ENCODE measurements at regions of chr14 and their contacts with region 1.

Region 1: DNA sequence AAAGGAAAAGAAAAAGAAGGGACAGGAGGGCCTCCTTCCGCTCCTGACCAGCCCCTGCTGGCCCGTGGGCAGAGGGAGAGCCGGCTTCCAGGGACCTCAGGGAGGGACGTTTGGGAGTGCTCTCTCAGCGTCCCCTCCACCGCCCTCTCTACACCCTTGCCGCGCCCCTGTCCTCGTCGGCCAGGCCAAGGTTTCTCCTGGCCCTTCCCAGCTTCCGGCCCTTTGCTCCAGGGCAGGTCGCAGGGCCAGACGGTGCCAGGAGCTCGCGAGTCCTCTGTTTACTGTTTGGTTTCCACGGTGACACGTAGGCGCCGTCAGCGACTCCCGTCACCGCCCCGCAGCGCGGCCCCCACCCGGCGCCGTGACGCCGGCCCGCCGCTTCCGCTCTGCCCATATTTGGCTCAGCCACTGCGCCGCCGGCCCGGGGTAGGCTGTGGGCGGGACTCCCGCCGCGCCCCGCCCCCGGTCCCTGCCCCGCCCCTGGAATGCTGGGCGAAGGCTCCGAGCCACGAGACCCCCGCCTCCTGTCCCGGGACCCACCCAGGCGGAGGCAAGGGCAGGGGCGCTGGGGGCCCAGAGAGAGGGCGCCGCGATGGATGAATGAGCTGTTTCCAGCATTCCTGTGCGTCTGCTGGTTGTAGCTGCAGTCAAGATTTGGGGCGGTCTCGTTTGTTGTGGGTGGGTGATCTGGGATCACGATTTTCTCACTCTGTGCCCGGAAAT is 15.5 kb downstream of the FOS start:
- DNase-seq: peak; percentile 90 to 99 (median 94)
- ATAC-seq: peak; percentile 87
- H3K4me3 ChIP-seq: peak overlapping the region; percentile 31 to 62
- H3K4me3 Mint-ChIP-seq: peak overlapping the region; percentile 88
- H3K27ac ChIP-seq: peak overlapping the region; percentile 95 to 99
- H3K27ac Mint-ChIP-seq: peak overlapping the region; percentile 93
- H3K4me1 ChIP-seq: peaks cover 23% of the 10 kb centered on the region
- H3K4me1 Mint-ChIP-seq: peaks cover 23% of the 10 kb centered on the region
- H3K27me3 ChIP-seq: peaks cover 0 to 2% of the 10 kb centered on the region in 2 experiments
- H3K27me3 Mint-ChIP-seq: no peaks in the 10 kb centered on the region
- CTCF ChIP-seq: no peak

Region 2: DNA sequence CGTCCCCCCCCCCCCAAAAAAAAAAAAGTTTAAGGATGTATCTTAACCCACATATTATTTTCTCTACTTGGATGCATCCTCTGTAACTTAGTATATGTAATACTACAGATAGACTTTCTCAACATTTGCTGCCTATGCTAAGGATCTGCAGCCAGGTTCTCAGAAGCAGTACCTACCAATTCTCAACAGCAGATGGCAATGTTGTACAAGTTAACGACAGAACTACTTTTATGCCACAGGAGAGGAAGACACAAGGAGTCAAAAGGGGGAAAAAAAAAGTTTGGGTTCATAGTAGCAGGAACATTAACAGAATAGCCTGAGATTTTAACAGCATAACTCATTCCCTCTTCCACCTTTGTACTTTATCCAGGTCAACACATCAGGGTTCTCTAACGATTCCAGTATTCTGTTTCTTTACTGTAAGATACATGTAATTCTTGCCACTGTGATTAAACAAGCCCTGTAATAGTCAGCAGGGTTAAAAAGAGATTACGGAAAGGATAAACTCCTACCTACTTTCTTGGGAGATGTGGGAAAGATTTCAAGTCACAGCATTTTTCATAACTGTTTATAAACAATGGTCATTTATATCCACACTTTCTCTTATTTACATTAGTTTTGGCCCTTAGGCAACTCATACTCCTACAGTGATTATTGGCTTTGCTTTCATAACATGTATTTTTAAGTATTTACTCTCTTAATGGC is 161.5 kb before region 1 on chr14:
- CTCF ChIA-PET with region 1: interaction called, 473 read pairs
- POLR2A ChIA-PET with region 1: interaction called, 8 read pairs
- intact Hi-C with region 1: loop called in 1 of 2 experiments (anchors 1 kb)
- DNase-seq: peak in 6 of 9 experiments; percentile 28 to 86 (median 54)
- ATAC-seq: peak; percentile 91
- H3K4me3 ChIP-seq: no peak overlapping the region
- H3K4me3 Mint-ChIP-seq: no peak overlapping the region
- H3K27ac ChIP-seq: no peak overlapping the region
- H3K27ac Mint-ChIP-seq: peak overlapping the region; percentile 12
- H3K4me1 ChIP-seq: peaks cover 3% of the 10 kb centered on the region
- H3K4me1 Mint-ChIP-seq: peaks cover 18% of the 10 kb centered on the region
- H3K27me3 ChIP-seq: no peaks in the 10 kb centered on the region
- H3K27me3 Mint-ChIP-seq: no peaks in the 10 kb centered on the region
- CTCF ChIP-seq: peak; percentile 79

Region 3: DNA sequence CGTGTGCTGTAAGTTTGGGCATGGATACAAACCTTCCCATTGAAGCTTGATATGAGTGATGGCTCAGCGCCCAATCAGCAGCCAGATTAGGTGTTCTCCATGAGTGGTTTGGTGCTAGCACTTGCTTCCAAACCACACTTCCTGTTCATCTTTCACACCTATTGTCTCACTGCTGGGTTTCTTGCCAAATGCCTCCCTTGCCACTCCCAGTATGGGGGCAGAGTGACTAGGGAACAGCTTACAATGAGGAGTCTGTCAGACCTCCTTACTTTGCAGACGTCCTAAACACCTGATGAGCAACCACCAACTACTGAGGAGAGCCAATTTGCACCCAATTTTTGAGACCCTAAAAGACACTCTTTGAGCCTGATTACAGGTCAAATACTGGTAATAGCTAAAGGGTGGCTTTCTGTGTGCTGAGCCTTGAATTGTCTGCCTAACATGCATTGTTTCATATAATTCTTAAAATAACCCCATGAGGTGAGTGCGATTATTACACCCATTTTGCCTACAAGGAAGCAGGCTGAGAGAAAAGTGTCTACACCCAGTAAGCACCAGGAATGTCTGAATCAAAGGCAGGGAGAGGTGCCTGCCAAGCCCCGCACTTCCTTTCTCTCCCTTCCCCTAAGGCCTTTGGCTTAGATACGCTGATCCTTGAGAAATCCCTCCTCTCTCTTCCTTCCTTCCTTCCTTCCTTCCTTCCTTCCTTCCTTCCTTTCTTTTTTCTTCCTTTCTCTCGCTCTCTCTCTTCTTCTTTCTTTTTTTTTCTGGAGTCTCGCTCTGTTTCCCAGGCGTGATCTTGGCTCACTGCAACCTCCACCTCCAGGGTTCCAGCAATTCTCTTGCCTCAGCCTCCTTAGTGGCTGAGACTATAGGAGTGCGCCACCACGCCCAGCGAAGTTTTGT is 63.7 kb before region 1 on chr14:
- CTCF ChIA-PET with region 1: interaction called, 124 read pairs
- POLR2A ChIA-PET with region 1: no interaction called
- intact Hi-C with region 1: loop called (anchors 1 kb)
- DNase-seq: peak; percentile 25 to 93 (median 56)
- ATAC-seq: peak; percentile 75
- H3K4me3 ChIP-seq: no peak overlapping the region
- H3K4me3 Mint-ChIP-seq: peak overlapping the region; percentile 24
- H3K27ac ChIP-seq: peak overlapping the region in 1 of 2 experiments; percentile 55
- H3K27ac Mint-ChIP-seq: peak overlapping the region; percentile 81
- H3K4me1 ChIP-seq: peaks cover 41% of the 10 kb centered on the region
- H3K4me1 Mint-ChIP-seq: peaks cover 51% of the 10 kb centered on the region
- H3K27me3 ChIP-seq: no peaks in the 10 kb centered on the region
- H3K27me3 Mint-ChIP-seq: no peaks in the 10 kb centered on the region
- CTCF ChIP-seq: peak; percentile 35

Region 4: DNA sequence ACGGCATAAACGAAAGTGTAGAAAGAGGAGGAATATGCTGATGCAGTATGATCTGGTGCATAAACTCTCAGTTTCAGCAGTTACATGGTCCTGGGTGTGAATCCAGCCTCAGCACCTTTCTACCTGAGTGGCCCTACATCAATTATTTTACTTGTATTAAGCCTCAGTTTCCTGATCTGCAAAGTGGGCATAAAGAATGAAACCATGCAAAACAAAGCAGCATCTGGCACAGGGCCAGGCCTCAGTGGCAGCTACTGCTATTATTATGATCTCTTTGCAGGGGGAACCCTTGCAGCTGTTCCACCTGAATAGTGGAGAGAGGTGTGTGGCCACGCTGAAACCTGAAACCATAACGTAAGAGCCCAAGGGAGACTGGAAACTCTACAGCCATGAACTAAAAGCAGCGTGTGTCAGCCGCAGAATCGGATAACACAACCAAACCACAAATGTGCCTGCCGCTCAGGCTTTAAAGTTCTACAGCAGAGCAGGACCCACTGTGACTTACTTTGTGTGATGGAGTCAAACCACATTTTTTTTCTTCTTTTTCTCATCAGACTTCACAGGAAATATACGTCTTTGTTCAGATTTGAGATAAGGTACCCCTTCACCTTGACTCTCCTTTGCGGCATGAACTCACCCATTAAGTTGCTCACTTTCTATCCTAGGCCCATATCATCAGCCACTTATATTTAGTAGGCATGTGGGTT is 44.7 kb before region 1 on chr14:
- CTCF ChIA-PET with region 1: interaction called, 20 read pairs
- POLR2A ChIA-PET with region 1: interaction called, 9 read pairs
- intact Hi-C with region 1: loop called (anchors 1 kb)
- DNase-seq: peak; percentile 68 to 97 (median 81)
- ATAC-seq: peak; percentile 74
- H3K4me3 ChIP-seq: peak overlapping the region; percentile 9 to 24
- H3K4me3 Mint-ChIP-seq: peak overlapping the region; percentile 13
- H3K27ac ChIP-seq: peak overlapping the region; percentile 84 to 90
- H3K27ac Mint-ChIP-seq: peak overlapping the region; percentile 88
- H3K4me1 ChIP-seq: peaks cover 62% of the 10 kb centered on the region
- H3K4me1 Mint-ChIP-seq: peaks cover 58% of the 10 kb centered on the region
- H3K27me3 ChIP-seq: no peaks in the 10 kb centered on the region
- H3K27me3 Mint-ChIP-seq: no peaks in the 10 kb centered on the region
- CTCF ChIP-seq: no peak

Region 5: DNA sequence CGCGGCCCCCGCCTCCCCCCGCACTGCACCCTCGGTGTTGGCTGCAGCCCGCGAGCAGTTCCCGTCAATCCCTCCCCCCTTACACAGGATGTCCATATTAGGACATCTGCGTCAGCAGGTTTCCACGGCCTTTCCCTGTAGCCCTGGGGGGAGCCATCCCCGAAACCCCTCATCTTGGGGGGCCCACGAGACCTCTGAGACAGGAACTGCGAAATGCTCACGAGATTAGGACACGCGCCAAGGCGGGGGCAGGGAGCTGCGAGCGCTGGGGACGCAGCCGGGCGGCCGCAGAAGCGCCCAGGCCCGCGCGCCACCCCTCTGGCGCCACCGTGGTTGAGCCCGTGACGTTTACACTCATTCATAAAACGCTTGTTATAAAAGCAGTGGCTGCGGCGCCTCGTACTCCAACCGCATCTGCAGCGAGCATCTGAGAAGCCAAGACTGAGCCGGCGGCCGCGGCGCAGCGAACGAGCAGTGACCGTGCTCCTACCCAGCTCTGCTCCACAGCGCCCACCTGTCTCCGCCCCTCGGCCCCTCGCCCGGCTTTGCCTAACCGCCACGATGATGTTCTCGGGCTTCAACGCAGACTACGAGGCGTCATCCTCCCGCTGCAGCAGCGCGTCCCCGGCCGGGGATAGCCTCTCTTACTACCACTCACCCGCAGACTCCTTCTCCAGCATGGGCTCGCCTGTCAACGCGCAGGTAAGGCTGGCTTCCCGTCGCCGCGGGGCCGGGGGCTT is 15.5 kb before region 1 on chr14 and contains the start of gene FOS:
- CTCF ChIA-PET with region 1: interaction called, 11 read pairs
- POLR2A ChIA-PET with region 1: interaction called, 9 read pairs
- intact Hi-C with region 1: loop called (anchors 1 kb)
- DNase-seq: peak; percentile 81 to 98 (median 91)
- ATAC-seq: peak; percentile 67
- H3K4me3 ChIP-seq: peak within 1 kb of the TSS; percentile 77 to 89
- H3K4me3 Mint-ChIP-seq: peak within 1 kb of the TSS; percentile 97
- H3K27ac ChIP-seq: peak within 1 kb of the TSS; percentile 81 to 90
- H3K27ac Mint-ChIP-seq: peak within 1 kb of the TSS; percentile 98
- H3K4me1 ChIP-seq: peaks cover 55% of the 10 kb centered on the region
- H3K4me1 Mint-ChIP-seq: peaks cover 47% of the 10 kb centered on the region
- H3K27me3 ChIP-seq: peaks cover 10 to 38% of the 10 kb centered on the region in 2 experiments
- H3K27me3 Mint-ChIP-seq: peaks cover 17% of the 10 kb centered on the region
- CTCF ChIP-seq: no peak
- total RNA-seq, gene FOS: 1,826 to 1,941 TPM

Region 6: GRCh38 chr14:75350505-75351060 is 56.5 kb after region 1 on chr14:
- CTCF ChIA-PET with region 1: no interaction called
- POLR2A ChIA-PET with region 1: no interaction called
- intact Hi-C with region 1: no loop called
- DNase-seq: no peak
- ATAC-seq: no peak
- H3K4me3 ChIP-seq: no peak overlapping the region
- H3K4me3 Mint-ChIP-seq: no peak overlapping the region
- H3K27ac ChIP-seq: no peak overlapping the region
- H3K27ac Mint-ChIP-seq: no peak overlapping the region
- H3K4me1 ChIP-seq: no peaks in the 10 kb centered on the region
- H3K4me1 Mint-ChIP-seq: no peaks in the 10 kb centered on the region
- H3K27me3 ChIP-seq: no peaks in the 10 kb centered on the region
- H3K27me3 Mint-ChIP-seq: peaks cover 2% of the 10 kb centered on the region
- CTCF ChIP-seq: no peak

Measured in CD8-positive, alpha-beta T cell (primary cell).